Right ventricle myocardium superior (tissue), 1 donor: ENCODE measurements at regions of chr9 and their contacts with region 1.

Region 1: GRCh38 chr9:114348906-114349482 is 19.3 kb downstream of the ORM2 start:
- DNase-seq: peak; percentile 58
- ATAC-seq: peak; percentile 63

Region 2: DNA sequence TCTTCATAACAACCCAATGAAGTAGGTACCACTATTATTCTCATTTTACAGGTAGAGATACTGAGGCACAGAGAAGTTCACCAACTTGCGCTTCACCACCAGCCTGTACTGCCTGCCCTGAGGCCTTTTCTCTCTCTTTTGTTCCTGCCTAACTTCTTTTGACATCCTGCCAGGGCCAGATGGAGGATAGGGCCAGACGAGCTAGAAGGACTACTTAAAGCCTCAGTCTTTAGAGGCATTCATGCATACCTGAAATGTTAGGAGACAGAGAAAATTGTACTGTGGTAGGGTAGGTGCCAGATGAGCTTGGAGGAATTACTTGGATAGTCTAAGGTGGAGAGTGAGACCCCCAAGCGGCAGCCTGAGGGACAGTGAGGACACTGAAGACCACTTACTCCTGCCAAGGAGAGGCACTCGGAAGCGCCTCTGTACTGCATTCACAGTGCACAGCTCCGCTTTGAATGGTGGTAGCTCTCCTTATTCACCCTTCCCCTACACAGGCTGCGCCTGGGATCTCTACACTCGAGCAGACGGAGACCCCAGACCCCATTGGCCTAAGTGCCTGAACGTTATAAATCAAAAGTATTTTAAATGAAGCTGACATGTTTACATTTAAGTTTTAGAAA is 32.3 kb before region 1 on chr9:
- intact Hi-C with region 1: no loop called
- DNase-seq: no peak
- ATAC-seq: no peak

Region 3: DNA sequence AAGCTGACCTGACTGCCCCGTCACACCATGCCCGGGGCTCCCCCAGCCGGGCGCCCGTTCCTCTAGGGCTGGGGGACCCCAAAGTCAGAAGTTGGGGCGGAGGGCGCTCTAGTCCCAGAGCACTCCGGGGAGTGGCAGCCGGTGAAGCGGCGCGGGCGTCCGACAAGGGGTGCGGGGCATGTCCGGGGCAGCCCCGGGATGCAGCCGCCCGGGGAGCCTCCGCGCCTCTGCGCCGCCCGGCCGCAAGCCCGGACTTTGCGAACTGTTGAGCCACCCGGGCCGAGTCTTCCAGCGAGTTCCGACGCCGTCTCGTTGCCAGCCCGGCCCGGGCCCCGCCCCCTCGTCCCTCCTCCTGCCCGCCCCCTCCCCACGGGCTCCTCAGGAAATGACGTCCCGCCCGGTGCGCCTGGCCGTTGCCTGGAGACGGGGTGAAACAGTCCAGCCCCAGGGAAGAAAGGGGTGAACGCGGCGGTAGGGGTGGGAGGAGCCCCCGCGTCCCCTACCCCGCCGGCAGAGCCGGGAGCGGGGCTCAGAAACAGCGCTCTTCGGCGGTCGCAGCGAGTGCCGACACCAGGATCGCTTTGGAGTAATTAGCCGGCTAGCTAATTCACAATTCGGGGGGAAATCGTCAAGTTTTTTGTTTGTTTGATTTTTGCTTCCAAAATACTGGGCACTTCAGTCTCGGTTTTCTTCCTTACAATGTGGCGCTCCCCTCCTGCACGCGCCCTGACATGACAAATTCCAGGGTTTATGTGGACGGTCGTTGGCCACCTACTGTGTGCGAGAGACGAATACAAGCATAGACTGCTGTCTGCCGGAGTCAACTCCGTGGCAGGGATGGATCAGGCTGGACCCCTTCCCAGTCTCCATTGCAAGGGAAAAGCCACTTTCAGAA is 156.4 kb after region 1 on chr9 and contains the start of gene WHRN:
- intact Hi-C with region 1: loop called (anchors 10 kb)
- DNase-seq: peak; percentile 94
- ATAC-seq: peak; percentile 96
- total RNA-seq, gene WHRN: 0.56 TPM